Adrenal gland (tissue), 19 donors: ENCODE measurements at regions of chr2 and their contacts with region 1.

Region 1: GRCh38 chr2:42474765-42475454 is 18.9 kb downstream of the KCNG3 start:
- DNase-seq: no peak
- H3K4me3 ChIP-seq: no peak overlapping the region
- H3K27ac ChIP-seq: no peak overlapping the region
- H3K4me1 ChIP-seq: no peaks in the 10 kb centered on the region
- H3K27me3 ChIP-seq: no peaks in the 10 kb centered on the region
- CTCF ChIP-seq: no peak
- POLR2A ChIP-seq: no peak

Region 2: GRCh38 chr2:42532397-42532796 is 57.5 kb after region 1 on chr2:
- intact Hi-C with region 1: no loop called
- DNase-seq: no peak
- H3K4me3 ChIP-seq: no peak overlapping the region
- H3K27ac ChIP-seq: no peak overlapping the region
- H3K4me1 ChIP-seq: no peaks in the 10 kb centered on the region
- H3K27me3 ChIP-seq: no peaks in the 10 kb centered on the region
- CTCF ChIP-seq: no peak
- POLR2A ChIP-seq: no peak

Region 3: GRCh38 chr2:43194121-43194869 is 719.4 kb after region 1 on chr2:
- intact Hi-C with region 1: loop called in 1 of 2 experiments (anchors 10 kb)
- DNase-seq: no peak
- H3K4me3 ChIP-seq: no peak overlapping the region
- H3K27ac ChIP-seq: no peak overlapping the region
- H3K4me1 ChIP-seq: no peaks in the 10 kb centered on the region
- H3K27me3 ChIP-seq: no peaks in the 10 kb centered on the region
- CTCF ChIP-seq: no peak
- POLR2A ChIP-seq: no peak